Activated B cell treated with CpG ODN at 0.5 μM for 24 hours (primary cell): ENCODE measurements at regions of chr7 and their contacts with region 1.

Region 1: DNA sequence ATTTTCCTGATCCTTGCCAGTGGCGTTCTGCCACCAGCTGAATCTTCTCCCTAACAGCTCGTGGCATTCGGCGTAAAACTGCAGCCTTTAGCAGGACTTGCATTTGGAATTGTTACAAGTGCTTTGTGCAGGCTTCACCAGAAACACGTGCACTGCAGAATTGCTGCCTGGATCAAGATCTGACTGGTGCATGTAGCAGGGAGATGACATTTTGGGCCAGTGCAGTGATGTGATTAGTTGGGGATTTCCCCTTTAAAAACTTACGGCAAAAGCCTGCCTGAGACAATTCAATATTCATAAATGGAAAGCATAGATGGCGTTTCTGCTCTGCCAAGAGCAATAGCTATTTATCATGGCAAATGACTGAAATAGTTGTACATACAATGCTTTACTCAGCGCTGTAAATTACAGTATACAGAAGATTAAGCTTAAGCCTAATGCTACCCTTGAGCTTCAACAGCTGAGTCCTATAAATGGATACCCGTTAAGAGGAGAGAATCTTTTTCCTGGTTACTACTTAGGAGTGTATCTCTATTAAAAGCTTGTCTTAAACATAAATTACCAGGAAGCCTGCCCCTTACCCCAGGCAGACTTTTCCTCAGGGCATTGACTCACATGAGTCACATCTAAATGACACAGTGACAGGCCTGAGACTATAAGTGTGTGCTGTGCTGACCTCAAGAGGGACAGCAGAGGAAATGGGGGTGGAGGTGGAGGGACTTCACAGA is 106.3 kb downstream of the ATXN7L1 start:
- DNase-seq: no peak
- ATAC-seq: peak; percentile 82
- H3K4me3 Mint-ChIP-seq: peak overlapping the region; percentile 66
- H3K27ac Mint-ChIP-seq: peak overlapping the region; percentile 80
- H3K4me1 Mint-ChIP-seq: peaks cover 49% of the 10 kb centered on the region
- H3K27me3 Mint-ChIP-seq: no peaks in the 10 kb centered on the region
- CTCF ChIP-seq: no peak

Region 2: DNA sequence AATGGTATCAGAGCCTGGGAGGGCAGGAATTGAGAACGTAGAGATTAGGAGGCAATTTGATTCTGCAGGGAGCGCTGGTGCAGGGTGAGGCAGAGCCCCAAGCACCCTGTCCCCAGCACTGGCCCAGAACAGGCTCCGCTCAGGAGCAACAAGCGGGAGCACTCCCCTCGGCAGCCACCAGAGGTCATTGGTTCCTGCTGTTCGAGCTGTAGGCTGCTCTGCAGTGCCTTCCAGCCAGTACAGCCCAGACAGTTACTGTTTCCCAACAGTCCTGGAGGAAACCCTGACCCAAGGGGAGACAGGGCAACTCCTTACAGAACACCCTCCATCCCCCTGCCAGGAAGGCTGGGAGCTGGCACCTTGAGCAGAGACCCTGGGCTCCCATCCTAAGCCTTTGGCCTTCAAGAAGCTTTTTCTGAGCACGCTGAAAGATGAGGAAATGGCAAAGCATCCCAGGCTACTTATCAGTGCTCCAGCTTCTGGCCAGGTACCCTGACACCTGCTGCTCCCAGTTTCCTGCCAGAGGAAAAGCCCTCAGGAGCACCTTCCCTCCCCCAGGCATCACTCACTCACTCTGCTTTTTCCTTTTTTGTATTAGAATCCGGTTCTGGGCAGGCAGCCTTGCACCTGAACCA is 117.6 kb before region 1 on chr7:
- CTCF ChIA-PET with region 1: interaction called, 3 read pairs
- POLR2A ChIA-PET with region 1: no interaction called
- intact Hi-C with region 1: loop called (anchors 1 kb)
- DNase-seq: peak; percentile 45
- ATAC-seq: peak; percentile 94
- H3K4me3 Mint-ChIP-seq: no peak overlapping the region
- H3K27ac Mint-ChIP-seq: no peak overlapping the region
- H3K4me1 Mint-ChIP-seq: peaks cover 2% of the 10 kb centered on the region
- H3K27me3 Mint-ChIP-seq: no peaks in the 10 kb centered on the region
- CTCF ChIP-seq: no peak

Region 3: GRCh38 chr7:105691733-105692564 is 78.1 kb before region 1 on chr7:
- CTCF ChIA-PET with region 1: interaction called, 4 read pairs
- POLR2A ChIA-PET with region 1: interaction called, 6 read pairs
- intact Hi-C with region 1: loop called (anchors 5 kb)
- DNase-seq: peak; percentile 40
- ATAC-seq: peak; percentile 75
- H3K4me3 Mint-ChIP-seq: peak overlapping the region; percentile 90
- H3K27ac Mint-ChIP-seq: peak overlapping the region; percentile 91
- H3K4me1 Mint-ChIP-seq: peaks cover 40% of the 10 kb centered on the region
- H3K27me3 Mint-ChIP-seq: no peaks in the 10 kb centered on the region
- CTCF ChIP-seq: no peak

Region 4: DNA sequence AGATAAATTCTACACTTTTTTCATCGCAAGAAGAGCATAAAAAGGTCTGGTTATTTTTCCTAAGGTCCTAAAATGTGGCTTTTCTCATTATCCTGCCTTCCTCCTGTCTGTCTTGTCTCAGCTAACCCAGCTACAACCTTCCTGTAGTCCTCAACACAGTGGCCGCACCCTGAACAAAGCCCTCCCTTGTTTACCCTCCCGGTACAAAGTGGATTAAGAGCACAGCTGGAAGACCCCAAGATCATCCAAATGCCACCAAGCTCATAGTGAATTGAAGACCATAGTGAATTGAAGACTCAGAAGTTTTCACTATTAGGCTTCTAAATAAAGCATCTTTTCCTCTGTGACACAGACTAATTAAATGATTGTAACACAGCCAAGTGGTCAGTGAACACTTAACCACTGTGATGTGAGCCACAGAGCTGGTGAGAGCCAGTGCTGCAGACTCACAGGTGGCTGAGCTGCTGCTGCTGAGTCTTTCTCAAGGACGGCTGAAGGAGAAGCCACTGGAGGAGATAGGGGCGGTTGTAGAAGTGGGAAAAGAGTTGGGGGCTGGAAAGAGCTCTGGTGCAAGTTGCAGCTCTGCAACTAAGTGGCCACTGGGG is 17.3 kb before region 1 on chr7:
- CTCF ChIA-PET with region 1: no interaction called
- POLR2A ChIA-PET with region 1: no interaction called
- intact Hi-C with region 1: no loop called
- DNase-seq: no peak
- ATAC-seq: no peak
- H3K4me3 Mint-ChIP-seq: no peak overlapping the region
- H3K27ac Mint-ChIP-seq: no peak overlapping the region
- H3K4me1 Mint-ChIP-seq: no peaks in the 10 kb centered on the region
- H3K27me3 Mint-ChIP-seq: no peaks in the 10 kb centered on the region
- CTCF ChIP-seq: no peak

Region 5: DNA sequence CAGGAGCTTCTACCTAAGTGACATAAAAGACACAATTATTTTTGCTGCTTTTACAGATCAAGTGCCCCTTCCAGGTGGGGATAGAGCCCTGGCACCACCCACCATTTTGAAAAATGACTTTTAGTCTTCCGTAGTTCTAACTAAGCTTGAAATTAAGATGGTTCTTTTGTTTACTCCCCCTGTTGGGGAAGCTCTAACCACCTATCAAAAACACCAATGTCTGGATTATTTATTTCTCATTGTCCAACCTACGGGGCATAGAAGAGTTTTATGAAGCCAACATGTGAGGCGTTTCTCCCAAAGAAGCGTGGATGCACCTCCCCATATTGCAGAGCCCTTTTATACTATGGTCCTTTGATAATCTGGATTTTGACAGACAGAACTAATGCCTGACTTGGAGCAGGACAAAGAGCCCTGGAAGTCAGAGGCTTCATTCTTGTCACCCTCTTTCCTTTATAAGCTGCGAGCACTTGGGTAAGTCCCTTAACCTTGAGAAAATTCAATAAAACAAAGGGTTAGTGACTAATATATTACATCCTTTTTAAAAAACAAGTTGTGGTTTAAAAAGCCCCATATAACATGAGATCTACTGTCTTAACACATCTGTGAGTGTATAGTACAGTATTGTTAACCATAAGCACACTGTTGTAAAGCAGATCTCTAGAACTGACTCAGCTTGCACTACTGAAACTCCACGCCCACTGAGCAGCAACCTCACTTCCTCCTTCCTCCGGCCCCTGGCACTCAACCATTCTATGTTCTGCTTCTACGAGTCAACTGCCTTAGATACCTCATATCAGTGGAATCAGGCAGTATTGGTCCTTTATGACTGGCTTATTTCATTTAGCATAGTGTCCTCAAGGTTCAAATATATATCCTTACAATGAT is 38.9 kb after region 1 on chr7:
- CTCF ChIA-PET with region 1: interaction called, 5 read pairs
- POLR2A ChIA-PET with region 1: interaction called, 20 read pairs
- intact Hi-C with region 1: loop called (anchors 1 kb)
- DNase-seq: peak; percentile 60
- ATAC-seq: peak; percentile 95
- H3K4me3 Mint-ChIP-seq: peak overlapping the region; percentile 66
- H3K27ac Mint-ChIP-seq: peak overlapping the region; percentile 87
- H3K4me1 Mint-ChIP-seq: peaks cover 46% of the 10 kb centered on the region
- H3K27me3 Mint-ChIP-seq: no peaks in the 10 kb centered on the region
- CTCF ChIP-seq: no peak

Region 6: DNA sequence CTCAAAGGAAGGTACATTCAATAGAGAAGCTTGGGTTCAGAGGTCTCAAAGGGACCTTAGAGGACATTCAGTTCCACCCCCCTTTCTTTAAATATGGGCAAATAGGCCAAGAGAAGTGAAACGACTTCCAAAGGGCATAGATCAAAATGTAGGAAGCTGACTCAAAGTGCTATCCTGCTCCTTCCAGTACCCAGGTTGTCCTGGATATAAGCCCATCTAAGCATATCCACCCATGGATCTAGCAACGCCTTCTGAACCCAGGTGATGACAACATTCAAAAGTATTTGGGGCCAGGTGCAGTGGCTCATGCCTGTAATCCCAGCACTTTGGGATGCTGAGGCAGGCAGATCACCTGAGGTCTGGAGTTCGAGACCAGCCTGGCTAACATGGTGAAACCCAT is 101.1 kb after region 1 on chr7:
- CTCF ChIA-PET with region 1: no interaction called
- POLR2A ChIA-PET with region 1: no interaction called
- intact Hi-C with region 1: loop called (anchors 1 kb)
- DNase-seq: no peak
- ATAC-seq: no peak
- H3K4me3 Mint-ChIP-seq: no peak overlapping the region
- H3K27ac Mint-ChIP-seq: no peak overlapping the region
- H3K4me1 Mint-ChIP-seq: peaks cover 7% of the 10 kb centered on the region
- H3K27me3 Mint-ChIP-seq: no peaks in the 10 kb centered on the region
- CTCF ChIP-seq: no peak

Region 7: GRCh38 chr7:106009403-106010226 is 239.6 kb after region 1 on chr7:
- CTCF ChIA-PET with region 1: interaction called, 3 read pairs
- POLR2A ChIA-PET with region 1: no interaction called
- intact Hi-C with region 1: loop called (anchors 1 kb)
- DNase-seq: peak; percentile 73
- ATAC-seq: peak; percentile 98
- H3K4me3 Mint-ChIP-seq: no peak overlapping the region
- H3K27ac Mint-ChIP-seq: no peak overlapping the region
- H3K4me1 Mint-ChIP-seq: peaks cover 22% of the 10 kb centered on the region
- H3K27me3 Mint-ChIP-seq: peaks cover 4% of the 10 kb centered on the region
- CTCF ChIP-seq: no peak

Region 8: GRCh38 chr7:106041140-106041717 is 271.2 kb after region 1 on chr7:
- CTCF ChIA-PET with region 1: interaction called, 15 read pairs
- POLR2A ChIA-PET with region 1: interaction called, 4 read pairs
- intact Hi-C with region 1: no loop called
- DNase-seq: no peak
- ATAC-seq: peak; percentile 66
- H3K4me3 Mint-ChIP-seq: no peak overlapping the region
- H3K27ac Mint-ChIP-seq: no peak overlapping the region
- H3K4me1 Mint-ChIP-seq: peaks cover 19% of the 10 kb centered on the region
- H3K27me3 Mint-ChIP-seq: no peaks in the 10 kb centered on the region
- CTCF ChIP-seq: peak; percentile 53